ENCODE measurements at regions of chr9 and their contacts with region 1.

Region 1: DNA sequence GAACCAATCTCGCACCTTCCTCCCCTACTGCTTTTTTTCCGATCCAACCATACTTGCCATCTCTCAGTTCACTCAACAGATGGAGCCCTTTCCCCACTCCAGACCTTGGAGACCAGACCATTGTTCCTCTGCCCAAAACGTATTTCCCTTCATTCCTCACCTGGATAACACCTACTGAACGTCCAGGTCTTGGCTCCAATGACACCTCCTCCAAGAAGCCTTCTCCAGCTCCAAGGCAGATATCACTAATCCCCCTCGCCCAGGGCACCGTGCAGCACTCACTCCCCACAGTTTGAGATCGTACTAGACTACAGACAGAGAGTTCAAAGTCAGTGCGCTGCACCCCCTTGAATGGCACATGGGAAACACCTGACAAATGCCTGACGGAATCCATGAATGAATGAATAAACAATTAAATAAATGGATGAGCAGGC is 47.1 kb upstream of the AKNA start:
- DNase-seq: peak in 1 of 2 experiments; percentile 31
- H3K4me3 ChIP-seq: no peak overlapping the region
- H3K27ac ChIP-seq: no peak overlapping the region
- H3K4me1 ChIP-seq: peaks cover 0 to 6% (median 0%) of the 10 kb centered on the region in 4 experiments; a peak in 3 of 7 replicates
- H3K27me3 ChIP-seq: no peaks in the 10 kb centered on the region
- CTCF ChIP-seq: peak; percentile 51 to 91 (median 84)
- EP300 ChIP-seq: no peak
- POLR2A ChIP-seq: no peak
- RAD21 ChIP-seq: peak; percentile 96

Region 2: GRCh38 chr9:114205171-114206015 is 229.5 kb before region 1 on chr9:
- CTCF ChIA-PET with region 1: no interaction called
- POLR2A ChIA-PET with region 1: no interaction called
- DNase-seq: no peak
- H3K4me3 ChIP-seq: no peak overlapping the region
- H3K27ac ChIP-seq: no peak overlapping the region; the same call in 1 of the 2 replicates
- H3K4me1 ChIP-seq: peaks cover 0 to 24% (median 6%) of the 10 kb centered on the region in 4 experiments; a peak in 4 of 7 replicates
- H3K27me3 ChIP-seq: no peaks in the 10 kb centered on the region
- CTCF ChIP-seq: no peak
- EP300 ChIP-seq: no peak
- POLR2A ChIP-seq: no peak
- RAD21 ChIP-seq: no peak

Region 3: DNA sequence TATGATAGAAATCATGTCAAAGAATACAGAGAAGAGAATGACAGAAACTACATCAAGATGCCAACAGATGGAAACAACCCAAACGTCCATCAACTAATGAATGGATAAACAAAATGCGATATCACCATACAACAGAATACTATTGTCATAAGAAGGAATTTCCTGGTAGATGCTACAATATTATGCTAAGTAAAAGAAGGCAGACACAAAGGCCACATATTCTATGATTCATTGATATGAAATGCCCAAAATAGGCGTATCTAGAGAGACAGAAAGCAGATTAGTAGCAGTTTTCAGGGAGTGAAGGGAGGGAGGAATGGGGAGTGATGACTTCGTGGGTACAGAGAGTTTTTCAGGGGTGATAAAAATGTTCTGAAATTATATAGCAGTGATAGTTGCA is 11.1 kb after region 1 on chr9:
- CTCF ChIA-PET with region 1: interaction called, 29 read pairs
- POLR2A ChIA-PET with region 1: interaction called, 7 read pairs
- DNase-seq: no peak
- H3K4me3 ChIP-seq: no peak overlapping the region
- H3K27ac ChIP-seq: no peak overlapping the region
- H3K4me1 ChIP-seq: peaks cover 0 to 6% (median 2%) of the 10 kb centered on the region in 4 experiments; a peak in 1 of 7 replicates
- H3K27me3 ChIP-seq: no peaks in the 10 kb centered on the region
- CTCF ChIP-seq: no peak
- EP300 ChIP-seq: no peak
- POLR2A ChIP-seq: no peak
- RAD21 ChIP-seq: no peak

Region 4: DNA sequence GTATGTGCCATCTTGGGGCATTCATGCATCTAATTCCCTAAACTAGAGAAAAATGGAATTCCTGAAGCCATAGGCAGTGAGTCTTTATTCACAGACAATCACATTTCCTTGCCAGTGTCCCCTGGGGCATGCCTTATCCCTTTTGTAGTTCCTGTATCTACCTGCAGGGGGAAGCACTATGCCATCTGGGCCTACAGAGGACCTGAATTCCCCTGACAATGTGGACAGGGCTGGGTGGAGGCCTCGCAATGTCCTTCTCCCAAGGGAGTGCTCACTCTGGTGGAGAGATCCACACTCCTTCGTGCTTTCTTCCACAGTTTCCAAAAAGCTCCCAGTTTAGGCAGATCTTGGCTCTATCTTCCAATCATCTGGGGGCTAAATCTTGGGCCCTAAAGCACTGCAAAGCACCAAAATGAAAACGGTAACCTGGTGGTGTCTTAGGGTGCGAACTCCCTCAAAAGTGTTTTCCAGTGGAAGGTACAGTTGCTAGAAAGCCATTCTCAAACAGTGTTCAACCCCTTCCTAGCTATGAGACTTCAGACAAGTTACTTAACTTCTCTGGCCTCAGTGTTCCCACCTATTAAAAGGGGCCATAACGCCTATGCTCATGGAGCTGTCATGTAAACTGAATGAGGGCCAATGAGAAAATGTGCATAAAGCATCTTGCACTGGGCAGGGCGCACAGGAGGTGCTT is 52.9 kb after region 1 on chr9:
- CTCF ChIA-PET with region 1: interaction called, 33 read pairs
- POLR2A ChIA-PET with region 1: no interaction called
- DNase-seq: peak in 1 of 2 experiments; percentile 78
- H3K4me3 ChIP-seq: no peak overlapping the region
- H3K27ac ChIP-seq: no peak overlapping the region
- H3K4me1 ChIP-seq: peaks cover 0 to 3% (median 0%) of the 10 kb centered on the region in 4 experiments; a peak in 3 of 7 replicates
- H3K27me3 ChIP-seq: no peaks in the 10 kb centered on the region
- CTCF ChIP-seq: peak; percentile 70 to 86 (median 81)
- EP300 ChIP-seq: no peak
- POLR2A ChIP-seq: no peak
- RAD21 ChIP-seq: peak; percentile 83 to 86

Region 5: GRCh38 chr9:114518599-114519022 is 83.7 kb after region 1 on chr9:
- CTCF ChIA-PET with region 1: interaction called, 12 read pairs
- POLR2A ChIA-PET with region 1: no interaction called
- DNase-seq: no peak
- H3K4me3 ChIP-seq: no peak overlapping the region
- H3K27ac ChIP-seq: no peak overlapping the region
- H3K4me1 ChIP-seq: no peaks in the 10 kb centered on the region
- H3K27me3 ChIP-seq: peaks cover 0 to 2% (median 0%) of the 10 kb centered on the region in 4 experiments; a peak in 2 of 7 replicates
- CTCF ChIP-seq: no peak
- EP300 ChIP-seq: no peak
- POLR2A ChIP-seq: no peak
- RAD21 ChIP-seq: no peak

Region 6: DNA sequence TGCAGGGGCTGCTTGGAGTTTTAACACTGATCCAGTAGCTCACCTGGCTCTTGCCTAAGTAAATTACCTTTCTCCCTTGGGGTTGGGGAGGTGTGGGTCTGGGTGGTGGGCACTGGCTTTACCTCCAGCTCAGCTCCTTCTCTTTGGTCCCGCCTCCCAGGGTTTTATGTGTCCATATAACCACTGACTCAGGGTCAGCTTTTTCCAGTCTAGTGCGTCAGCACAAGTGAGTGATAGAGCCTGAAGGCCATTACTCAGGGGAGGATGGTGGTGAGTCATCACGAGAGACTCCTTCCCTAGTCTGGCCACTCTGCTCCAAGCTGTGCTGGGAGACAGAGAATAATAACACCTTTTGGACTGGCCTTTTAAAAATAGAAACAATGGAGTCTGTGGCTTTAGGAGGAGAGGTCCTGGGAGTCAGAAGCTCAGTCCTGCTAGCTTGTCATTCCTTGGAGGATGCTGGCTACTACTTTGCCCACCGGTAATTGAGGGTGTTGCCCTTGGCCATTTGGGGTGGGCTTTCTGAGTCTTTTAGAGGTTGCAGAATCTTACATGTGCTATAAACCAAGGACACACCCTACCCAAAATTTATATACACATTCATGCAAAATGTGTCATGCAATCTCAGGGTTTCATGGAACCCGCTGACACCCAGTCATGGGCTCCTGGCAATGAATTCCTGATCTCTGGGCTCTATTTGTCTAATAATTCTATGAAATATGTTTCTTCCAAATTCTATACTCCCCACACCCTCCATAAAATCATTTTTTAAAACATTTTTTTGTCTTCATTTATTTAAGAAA is 117.2 kb after region 1 on chr9:
- CTCF ChIA-PET with region 1: interaction called, 29 read pairs
- POLR2A ChIA-PET with region 1: no interaction called
- DNase-seq: peak in 1 of 2 experiments; percentile 19
- H3K4me3 ChIP-seq: no peak overlapping the region
- H3K27ac ChIP-seq: no peak overlapping the region
- H3K4me1 ChIP-seq: no peaks in the 10 kb centered on the region
- H3K27me3 ChIP-seq: 0 out of 7 replicates have a peak, but pooled peaks cover 0 to 3% (median 0%) of the 10 kb centered on the region in 4 experiments
- CTCF ChIP-seq: no peak
- EP300 ChIP-seq: no peak
- POLR2A ChIP-seq: no peak
- RAD21 ChIP-seq: no peak

Region 7: DNA sequence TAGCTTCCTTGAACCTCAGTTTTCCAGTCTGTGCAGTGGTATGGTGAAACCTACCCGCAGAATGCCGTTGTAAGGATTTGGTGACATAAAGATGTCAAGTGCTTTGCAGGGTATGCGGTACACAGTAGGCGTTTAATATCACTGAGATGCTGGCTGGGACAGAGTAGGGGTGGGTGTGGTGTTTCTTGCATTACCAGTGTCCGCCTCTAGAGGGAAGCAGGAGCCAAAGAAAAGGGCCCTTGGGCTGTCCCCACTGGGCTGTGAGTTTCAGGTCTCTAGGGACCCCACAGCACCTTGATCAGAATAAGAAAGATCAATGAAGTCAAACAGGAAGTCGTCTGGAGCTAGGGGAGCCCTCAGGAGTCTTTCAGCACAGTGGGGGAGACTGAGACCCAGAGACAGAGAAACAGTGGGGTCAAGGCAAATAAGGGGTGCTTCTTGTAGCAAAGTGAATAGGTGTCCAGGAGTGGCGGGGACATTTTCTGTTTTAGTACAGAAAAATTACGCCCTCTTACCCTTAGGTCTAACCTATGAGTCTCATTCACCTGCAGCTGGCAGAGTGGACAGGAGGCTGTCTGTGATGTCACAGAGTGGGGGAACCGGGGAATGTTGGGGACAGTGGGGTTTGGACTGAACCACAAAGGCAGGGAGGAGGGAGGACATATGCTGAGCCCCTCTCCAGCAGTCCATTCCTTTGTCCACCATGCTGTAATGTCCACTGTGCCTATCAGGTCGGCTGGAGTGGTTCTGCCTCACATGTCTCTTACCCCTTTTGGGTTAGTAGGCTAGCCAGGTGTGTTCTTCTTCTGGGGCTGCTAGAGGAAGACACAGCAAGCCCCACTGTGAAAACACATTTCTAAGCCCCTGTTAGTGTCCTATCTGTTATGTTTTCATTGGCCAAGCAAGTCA is 227.4 kb after region 1 on chr9:
- CTCF ChIA-PET with region 1: interaction called, 165 read pairs
- POLR2A ChIA-PET with region 1: no interaction called
- DNase-seq: peak in 1 of 2 experiments; percentile 89
- H3K4me3 ChIP-seq: no peak overlapping the region
- H3K27ac ChIP-seq: no peak overlapping the region
- H3K4me1 ChIP-seq: peaks cover 0 to 11% (median 6%) of the 10 kb centered on the region in 4 experiments; a peak in 4 of 7 replicates
- H3K27me3 ChIP-seq: no peaks in the 10 kb centered on the region
- CTCF ChIP-seq: peak; percentile 70 to 90 (median 90)
- EP300 ChIP-seq: no peak
- POLR2A ChIP-seq: no peak
- RAD21 ChIP-seq: peak; percentile 81 to 87

Region 8: GRCh38 chr9:114852050-114852594 is 417.2 kb after region 1 on chr9:
- CTCF ChIA-PET with region 1: no interaction called
- POLR2A ChIA-PET with region 1: no interaction called
- DNase-seq: no peak
- H3K4me3 ChIP-seq: no peak overlapping the region
- H3K27ac ChIP-seq: no peak overlapping the region
- H3K4me1 ChIP-seq: no peaks in the 10 kb centered on the region; a peak in 1 of 7 replicates
- H3K27me3 ChIP-seq: no peaks in the 10 kb centered on the region
- CTCF ChIP-seq: no peak
- EP300 ChIP-seq: no peak
- POLR2A ChIP-seq: no peak
- RAD21 ChIP-seq: no peak